ENCODE measurements at regions of chr10 and their contacts with region 1.

Region 1: DNA sequence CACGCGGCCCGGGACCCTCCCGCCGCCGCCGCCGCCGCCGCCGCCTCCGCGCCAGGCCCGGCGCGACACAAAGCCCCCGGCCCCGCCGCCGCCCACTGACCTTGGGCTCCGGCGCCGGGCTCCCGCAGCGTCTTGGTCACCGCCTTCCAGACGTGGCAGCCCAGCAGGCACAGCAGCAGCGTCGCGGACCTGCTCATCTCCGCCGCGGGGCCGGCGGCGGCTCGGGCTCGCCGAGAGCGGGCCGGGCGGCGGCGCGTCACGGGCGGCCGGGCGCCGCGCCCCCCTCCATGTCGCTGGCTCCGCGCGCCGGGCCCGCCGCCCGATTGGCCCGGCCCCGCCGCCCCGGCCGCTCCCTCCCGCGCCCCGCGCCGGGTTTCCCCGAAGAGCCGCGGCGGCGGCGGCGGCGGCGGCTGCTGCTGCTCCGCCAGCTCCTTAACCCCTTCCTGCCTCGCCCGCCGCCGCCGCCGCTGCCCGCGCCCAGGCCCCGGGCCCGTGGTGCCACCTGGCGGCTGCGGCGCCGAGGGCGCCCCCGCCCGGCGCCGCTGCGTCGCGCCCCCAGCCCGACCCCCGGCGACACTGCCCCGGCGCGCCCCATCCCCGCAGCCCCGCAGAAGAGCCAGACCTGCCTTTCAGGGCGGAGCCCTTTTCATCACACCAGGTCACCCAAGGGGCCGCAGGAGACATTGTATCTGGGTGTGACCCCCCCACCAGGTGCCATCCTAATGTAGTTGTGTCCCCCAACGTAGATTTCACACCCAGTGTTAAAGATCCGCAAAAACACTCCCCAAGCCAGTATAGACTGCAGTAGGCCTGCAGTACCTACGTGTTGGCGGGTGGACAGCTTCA is at the start of gene FAM171A1:
- DNase-seq: no peak
- H3K4me3 ChIP-seq: peak within 1 kb of the TSS; percentile 75 to 93 (median 77)
- H3K27ac ChIP-seq: peak within 1 kb of the TSS; percentile 81
- H3K4me1 ChIP-seq: peaks cover 39% of the 10 kb centered on the region
- H3K27me3 ChIP-seq: no peaks in the 10 kb centered on the region
- CTCF ChIP-seq: peak in 1 of 2 donors; percentile 12
- POLR2A ChIP-seq: no peak
- total RNA-seq, gene FAM171A1: 75.8 and 81.8 TPM in 2 replicates

Region 2: GRCh38 chr10:14954001-14954770 is 416.9 kb before region 1 on chr10 and contains the start of gene DCLRE1C:
- CTCF ChIA-PET with region 1: interaction called, 3 read pairs
- POLR2A ChIA-PET with region 1: no interaction called
- dilution Hi-C with region 1: no loop called
- intact Hi-C with region 1: loop called (anchors 5 kb)
- DNase-seq: peak; percentile 87
- H3K4me3 ChIP-seq: peak within 1 kb of the TSS; percentile 48 to 73 (median 69)
- H3K27ac ChIP-seq: peak within 1 kb of the TSS; percentile 79
- H3K4me1 ChIP-seq: peaks cover 18% of the 10 kb centered on the region
- H3K27me3 ChIP-seq: no peaks in the 10 kb centered on the region
- CTCF ChIP-seq: no peak
- POLR2A ChIP-seq: peak; percentile 71
- total RNA-seq, gene DCLRE1C: 11.0 and 15.8 TPM in 2 replicates

Region 3: GRCh38 chr10:15146366-15146765 is 224.7 kb before region 1 on chr10:
- CTCF ChIA-PET with region 1: interaction called, 5 read pairs
- POLR2A ChIA-PET with region 1: interaction called, 3 read pairs
- dilution Hi-C with region 1: no loop called
- intact Hi-C with region 1: loop called (anchors 5 kb)
- DNase-seq: peak; percentile 20
- H3K4me3 ChIP-seq: no peak overlapping the region
- H3K27ac ChIP-seq: no peak overlapping the region
- H3K4me1 ChIP-seq: peaks cover 24% of the 10 kb centered on the region
- H3K27me3 ChIP-seq: no peaks in the 10 kb centered on the region
- CTCF ChIP-seq: no peak
- POLR2A ChIP-seq: no peak

Region 4: GRCh38 chr10:15200626-15201025 is 170.5 kb before region 1 on chr10:
- CTCF ChIA-PET with region 1: interaction called, 11 read pairs
- POLR2A ChIA-PET with region 1: no interaction called
- dilution Hi-C with region 1: no loop called
- intact Hi-C with region 1: no loop called
- DNase-seq: peak; percentile 94
- H3K4me3 ChIP-seq: no peak overlapping the region
- H3K27ac ChIP-seq: peak overlapping the region; percentile 100
- H3K4me1 ChIP-seq: peaks cover 70% of the 10 kb centered on the region
- H3K27me3 ChIP-seq: no peaks in the 10 kb centered on the region
- CTCF ChIP-seq: no peak
- POLR2A ChIP-seq: peak; percentile 82

Region 5: DNA sequence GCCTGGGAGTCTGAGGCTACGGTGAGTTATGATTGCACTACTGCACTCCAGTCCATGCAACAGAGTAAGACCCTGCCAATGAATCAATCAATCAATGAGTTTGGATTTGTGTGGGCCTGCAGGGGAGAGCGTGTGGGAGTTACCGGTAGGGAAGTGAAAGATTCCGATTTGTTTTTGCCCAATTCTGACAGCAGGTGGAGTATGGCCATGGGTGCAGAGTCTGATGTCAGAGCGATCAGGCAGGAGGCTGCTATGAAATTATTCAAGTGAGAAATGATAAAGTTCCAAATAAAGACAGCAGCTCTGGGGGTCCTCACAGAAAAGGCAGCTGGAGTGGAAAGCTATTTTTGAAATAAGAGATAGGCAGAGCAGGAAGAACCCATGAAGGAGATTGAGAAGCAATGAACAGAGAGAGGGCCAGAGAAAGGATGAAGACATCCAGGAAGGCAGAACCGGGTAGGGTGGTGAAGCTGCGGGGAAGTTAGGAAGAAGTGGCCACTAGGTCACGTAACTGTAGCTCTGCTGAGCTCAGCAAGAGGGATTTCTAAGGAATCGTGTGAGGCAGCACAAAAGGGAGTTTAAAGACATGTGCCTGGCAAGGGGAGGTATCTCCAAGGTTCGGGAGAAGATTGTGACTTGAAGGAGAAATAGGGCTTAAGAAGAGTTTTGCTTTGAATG is 108.9 kb before region 1 on chr10:
- CTCF ChIA-PET with region 1: interaction called, 21 read pairs
- POLR2A ChIA-PET with region 1: no interaction called
- dilution Hi-C with region 1: no loop called
- intact Hi-C with region 1: loop called (anchors 5 kb)
- DNase-seq: peak; percentile 29
- H3K4me3 ChIP-seq: no peak overlapping the region
- H3K27ac ChIP-seq: no peak overlapping the region
- H3K4me1 ChIP-seq: peaks cover 8% of the 10 kb centered on the region
- H3K27me3 ChIP-seq: no peaks in the 10 kb centered on the region
- CTCF ChIP-seq: peak in 1 of 2 donors; percentile 35
- POLR2A ChIP-seq: no peak

Region 6: GRCh38 chr10:15325243-15325943 is 45.7 kb before region 1 on chr10:
- CTCF ChIA-PET with region 1: interaction called, 10 read pairs
- POLR2A ChIA-PET with region 1: no interaction called
- dilution Hi-C with region 1: no loop called
- intact Hi-C with region 1: no loop called
- DNase-seq: peak; percentile 84
- H3K4me3 ChIP-seq: peak overlapping the region in 1 of 3 experiments; percentile 8
- H3K27ac ChIP-seq: peak overlapping the region; percentile 46
- H3K4me1 ChIP-seq: peaks cover 27% of the 10 kb centered on the region
- H3K27me3 ChIP-seq: no peaks in the 10 kb centered on the region
- CTCF ChIP-seq: no peak
- POLR2A ChIP-seq: peak; percentile 21

Region 7: DNA sequence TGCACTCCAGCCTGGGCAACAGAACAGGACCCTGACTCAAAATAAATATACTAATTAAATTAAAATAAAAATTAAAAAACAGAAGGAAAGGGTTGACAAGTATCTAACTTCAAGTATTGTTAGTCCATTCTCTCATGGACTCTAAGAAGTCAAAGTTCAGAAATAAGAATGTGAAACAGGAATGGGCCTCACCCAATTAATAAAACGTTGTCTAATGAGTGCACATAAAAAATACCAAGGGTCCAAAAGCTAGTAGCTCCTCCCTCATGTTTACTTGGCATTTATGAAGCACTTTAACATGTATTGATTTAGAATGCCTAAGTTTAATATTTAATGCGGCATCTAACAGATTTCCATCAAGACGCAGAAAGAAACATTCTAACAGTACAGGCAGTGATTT is 18.9 kb before region 1 on chr10:
- CTCF ChIA-PET with region 1: no interaction called
- POLR2A ChIA-PET with region 1: no interaction called
- dilution Hi-C with region 1: no loop called
- intact Hi-C with region 1: no loop called
- DNase-seq: no peak
- H3K4me3 ChIP-seq: no peak overlapping the region
- H3K27ac ChIP-seq: no peak overlapping the region
- H3K4me1 ChIP-seq: peaks cover 14% of the 10 kb centered on the region
- H3K27me3 ChIP-seq: no peaks in the 10 kb centered on the region
- CTCF ChIP-seq: no peak
- POLR2A ChIP-seq: no peak

Region 8: DNA sequence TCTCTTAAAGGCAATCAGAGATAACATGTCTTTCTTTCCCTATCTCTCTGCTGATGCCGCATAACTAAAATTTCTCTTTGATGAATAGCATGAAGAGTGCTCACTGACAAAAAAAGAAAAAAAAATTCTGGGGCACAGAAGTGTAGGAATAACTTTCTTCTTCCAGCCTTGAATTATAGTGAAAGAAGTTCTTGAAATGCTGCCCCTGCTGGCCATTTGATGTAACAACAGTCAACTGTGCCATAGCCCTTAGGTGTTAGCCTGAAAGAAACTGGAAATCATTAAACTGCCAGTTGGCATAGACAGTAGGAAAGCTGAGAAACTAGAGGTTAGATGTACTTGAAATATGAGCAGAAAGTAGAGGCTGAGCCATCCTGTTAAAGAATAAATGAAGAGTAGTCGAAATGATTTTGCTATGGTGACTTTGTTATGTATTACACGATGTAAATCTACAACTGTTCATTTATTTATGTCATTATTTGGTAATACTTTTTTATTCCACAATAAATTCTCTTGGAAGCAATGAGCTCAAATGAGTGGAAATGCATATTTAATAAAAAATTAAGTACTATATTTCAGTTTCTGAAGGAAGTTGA is 48.3 kb after region 1 on chr10:
- CTCF ChIA-PET with region 1: interaction called, 5 read pairs
- POLR2A ChIA-PET with region 1: no interaction called
- dilution Hi-C with region 1: no loop called
- intact Hi-C with region 1: loop called (anchors 5 kb)
- DNase-seq: peak; percentile 71
- H3K4me3 ChIP-seq: no peak overlapping the region
- H3K27ac ChIP-seq: no peak overlapping the region
- H3K4me1 ChIP-seq: no peaks in the 10 kb centered on the region
- H3K27me3 ChIP-seq: peaks cover 0 to 2% of the 10 kb centered on the region in 2 experiments
- CTCF ChIP-seq: peak; percentile 71 to 74
- POLR2A ChIP-seq: no peak

Region 9: GRCh38 chr10:16491933-16492332 is 1120.9 kb after region 1 on chr10:
- CTCF ChIA-PET with region 1: no interaction called
- POLR2A ChIA-PET with region 1: no interaction called
- dilution Hi-C with region 1: no loop called
- intact Hi-C with region 1: no loop called
- DNase-seq: no peak
- H3K4me3 ChIP-seq: no peak overlapping the region
- H3K27ac ChIP-seq: no peak overlapping the region
- H3K4me1 ChIP-seq: no peaks in the 10 kb centered on the region
- H3K27me3 ChIP-seq: no peaks in the 10 kb centered on the region
- CTCF ChIP-seq: no peak
- POLR2A ChIP-seq: no peak